Mammary epithelial cell (primary cell): ENCODE measurements at regions of chr12 and their contacts with region 1.

Region 1: GRCh38 chr12:111330800-111331752 is 37.8 kb downstream of the PHETA1 start:
- DNase-seq: peak; percentile 37
- H3K4me3 ChIP-seq: no peak overlapping the region
- H3K27ac ChIP-seq: no peak overlapping the region
- H3K4me1 ChIP-seq: no peaks in the 10 kb centered on the region
- H3K27me3 ChIP-seq: no peaks in the 10 kb centered on the region
- CTCF ChIP-seq: peak; percentile 50 to 58

Region 2: GRCh38 chr12:110245369-110245772 is 1085.7 kb before region 1 on chr12:
- CTCF ChIA-PET with region 1: no interaction called
- dilution Hi-C with region 1: no loop called
- in situ Hi-C with region 1: no loop called
- intact Hi-C with region 1: no loop called
- DNase-seq: no peak
- H3K4me3 ChIP-seq: no peak overlapping the region
- H3K27ac ChIP-seq: no peak overlapping the region
- H3K4me1 ChIP-seq: peaks cover 39% of the 10 kb centered on the region
- H3K27me3 ChIP-seq: no peaks in the 10 kb centered on the region
- CTCF ChIP-seq: peak; percentile 41 to 51

Region 3: DNA sequence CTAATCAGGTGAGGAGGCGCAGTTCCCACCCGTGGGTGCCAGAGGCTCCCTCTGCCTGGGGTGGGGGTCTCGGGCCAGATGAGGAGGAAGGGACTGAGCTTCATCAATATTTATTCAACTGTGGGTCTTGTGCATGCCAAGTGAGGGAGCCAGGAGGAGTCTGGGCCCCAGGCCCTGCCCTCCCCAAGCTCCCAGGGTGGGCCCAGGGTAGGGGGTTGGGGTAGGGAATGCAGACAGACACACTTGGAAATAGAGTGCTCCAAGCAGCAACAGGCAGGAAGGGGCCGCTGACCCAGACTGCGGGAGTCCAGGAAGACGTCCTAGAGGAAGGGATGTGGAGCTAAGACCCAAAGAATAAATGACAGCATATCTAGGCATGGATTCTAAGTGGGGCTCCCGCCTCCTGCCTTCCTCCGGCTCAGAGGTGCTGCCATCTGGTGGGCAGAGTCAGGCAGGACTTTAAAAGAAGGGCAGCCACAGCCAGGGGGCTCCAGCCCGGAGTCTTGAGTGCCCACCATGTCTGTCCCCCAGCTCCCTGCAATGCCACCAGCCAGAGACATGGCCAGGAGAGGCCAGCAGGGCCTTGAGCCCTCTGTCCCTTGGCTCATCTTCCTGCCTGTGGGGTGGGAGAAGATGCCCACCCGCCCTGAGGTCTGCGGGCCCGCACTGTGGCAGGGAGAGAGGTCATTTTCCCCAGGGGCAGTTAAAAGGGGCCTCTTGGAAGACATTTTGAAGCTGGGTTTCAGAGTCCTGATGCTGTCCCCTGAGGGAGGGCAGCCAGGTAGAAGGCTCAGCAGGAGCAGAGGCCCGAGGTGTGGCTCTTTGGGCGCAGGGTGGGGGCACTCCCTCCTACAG is 32.3 kb before region 1 on chr12:
- CTCF ChIA-PET with region 1: no interaction called
- dilution Hi-C with region 1: no loop called
- in situ Hi-C with region 1: no loop called
- intact Hi-C with region 1: loop called (anchors 1 kb)
- DNase-seq: peak; percentile 22
- H3K4me3 ChIP-seq: no peak overlapping the region
- H3K27ac ChIP-seq: no peak overlapping the region
- H3K4me1 ChIP-seq: no peaks in the 10 kb centered on the region
- H3K27me3 ChIP-seq: no peaks in the 10 kb centered on the region
- CTCF ChIP-seq: peak; percentile 72 to 85

Region 4: GRCh38 chr12:111451649-111452129 is 120.6 kb after region 1 on chr12:
- CTCF ChIA-PET with region 1: interaction called, 9 read pairs
- dilution Hi-C with region 1: no loop called
- in situ Hi-C with region 1: loop called in 1 of 2 experiments (anchors 5 kb)
- intact Hi-C with region 1: loop called (anchors 1 kb)
- DNase-seq: peak; percentile 26
- H3K4me3 ChIP-seq: no peak overlapping the region
- H3K27ac ChIP-seq: no peak overlapping the region
- H3K4me1 ChIP-seq: no peaks in the 10 kb centered on the region
- H3K27me3 ChIP-seq: no peaks in the 10 kb centered on the region
- CTCF ChIP-seq: peak; percentile 74 to 79

Region 5: DNA sequence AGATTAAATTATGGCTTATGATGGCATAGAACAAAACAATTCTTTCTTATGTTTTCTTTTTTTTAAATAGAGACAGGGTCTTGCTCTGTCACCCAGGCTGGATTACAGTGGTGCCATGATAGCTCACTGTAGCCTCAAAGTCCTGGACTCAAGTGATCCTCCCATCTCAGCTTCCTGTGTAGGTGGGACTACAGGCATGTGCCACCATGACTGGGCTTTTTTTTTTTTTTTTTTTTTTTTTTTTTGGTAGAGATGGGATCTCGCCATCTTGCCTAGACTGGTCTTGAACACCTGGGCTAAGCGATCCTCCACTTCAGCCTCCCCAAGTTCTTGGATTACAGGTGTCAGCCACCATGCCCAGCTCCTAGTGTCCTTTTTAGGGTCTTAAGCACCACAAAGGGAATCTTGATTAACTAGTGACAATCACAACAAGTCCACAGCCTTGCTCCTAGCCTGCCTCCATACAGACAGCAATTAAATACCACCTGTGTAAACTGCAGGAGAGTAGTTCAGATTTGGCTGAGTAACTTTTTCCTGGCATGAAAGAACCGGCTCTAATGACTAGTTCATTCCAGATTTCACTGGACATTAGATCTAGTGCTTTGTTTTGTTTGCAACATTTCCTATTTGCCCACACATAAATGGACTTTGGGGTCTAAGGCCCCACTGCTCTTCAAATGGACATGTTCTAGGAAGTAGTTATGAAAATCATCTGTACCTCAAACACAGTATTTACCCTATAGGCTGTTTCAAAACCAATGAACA is 136.2 kb after region 1 on chr12:
- CTCF ChIA-PET with region 1: no interaction called
- dilution Hi-C with region 1: no loop called
- in situ Hi-C with region 1: no loop called
- intact Hi-C with region 1: no loop called
- DNase-seq: no peak
- H3K4me3 ChIP-seq: no peak overlapping the region
- H3K27ac ChIP-seq: no peak overlapping the region
- H3K4me1 ChIP-seq: no peaks in the 10 kb centered on the region
- H3K27me3 ChIP-seq: no peaks in the 10 kb centered on the region
- CTCF ChIP-seq: no peak

Region 6: DNA sequence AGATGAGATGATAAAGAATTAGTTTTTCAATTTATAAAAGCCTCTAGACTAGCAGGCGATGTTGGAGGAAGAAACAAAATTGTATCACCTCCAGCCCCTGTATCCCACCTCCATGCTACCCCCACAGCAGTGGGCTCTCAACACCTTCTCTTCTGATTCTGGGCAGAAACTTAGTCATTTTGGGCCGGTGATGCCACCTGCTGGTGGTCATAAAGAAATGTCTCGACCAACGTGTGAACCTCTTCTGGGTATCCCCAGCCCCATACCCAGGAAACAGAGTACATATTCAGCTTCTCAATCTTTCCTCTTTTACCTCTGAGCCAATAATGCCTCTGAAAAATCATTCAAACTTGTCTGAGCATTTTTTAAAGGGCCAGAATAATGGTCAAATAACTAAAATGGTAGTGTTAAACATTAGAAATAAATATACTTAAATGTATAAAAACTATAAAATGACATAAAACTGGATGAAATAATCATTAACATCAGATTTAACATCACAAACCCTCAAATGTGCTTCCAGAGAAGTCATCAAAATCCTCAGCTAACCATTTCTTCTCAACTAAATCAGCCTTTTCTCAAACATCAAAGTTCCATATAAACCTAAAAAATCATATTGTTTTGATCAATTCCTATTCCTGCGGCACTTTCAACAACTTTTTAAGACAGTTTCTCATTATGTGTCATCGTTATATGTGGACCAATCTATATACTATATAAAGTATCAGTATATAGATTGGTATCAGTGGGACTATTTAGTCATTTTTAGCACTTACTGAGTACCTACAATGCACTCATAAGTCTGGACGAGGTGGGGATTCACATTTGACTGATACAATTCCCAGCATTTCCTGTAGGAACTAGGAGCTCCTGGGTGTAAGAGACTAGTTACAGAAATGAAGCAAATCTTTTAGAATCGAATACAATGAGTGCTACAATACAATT is 198.6 kb after region 1 on chr12:
- CTCF ChIA-PET with region 1: no interaction called
- dilution Hi-C with region 1: no loop called
- in situ Hi-C with region 1: no loop called
- intact Hi-C with region 1: loop called (anchors 2 kb)
- DNase-seq: peak; percentile 24
- H3K4me3 ChIP-seq: no peak overlapping the region
- H3K27ac ChIP-seq: no peak overlapping the region
- H3K4me1 ChIP-seq: no peaks in the 10 kb centered on the region
- H3K27me3 ChIP-seq: no peaks in the 10 kb centered on the region
- CTCF ChIP-seq: peak; percentile 60 to 73

Region 7: GRCh38 chr12:111673503-111673902 is 342.4 kb after region 1 on chr12:
- CTCF ChIA-PET with region 1: no interaction called
- dilution Hi-C with region 1: no loop called
- in situ Hi-C with region 1: no loop called
- intact Hi-C with region 1: loop called (anchors 10 kb)
- DNase-seq: no peak
- H3K4me3 ChIP-seq: no peak overlapping the region
- H3K27ac ChIP-seq: no peak overlapping the region
- H3K4me1 ChIP-seq: no peaks in the 10 kb centered on the region
- H3K27me3 ChIP-seq: no peaks in the 10 kb centered on the region
- CTCF ChIP-seq: peak; percentile 38 to 47

Region 8: GRCh38 chr12:111788178-111788654 is 457.1 kb after region 1 on chr12:
- CTCF ChIA-PET with region 1: no interaction called
- dilution Hi-C with region 1: no loop called
- in situ Hi-C with region 1: no loop called
- intact Hi-C with region 1: loop called (anchors 2 kb)
- DNase-seq: no peak
- H3K4me3 ChIP-seq: no peak overlapping the region
- H3K27ac ChIP-seq: no peak overlapping the region
- H3K4me1 ChIP-seq: no peaks in the 10 kb centered on the region
- H3K27me3 ChIP-seq: no peaks in the 10 kb centered on the region
- CTCF ChIP-seq: peak; percentile 27 to 81